Mucosa of descending colon (tissue), 3 donors: ENCODE measurements at regions of chr5 and their contacts with region 1.

Region 1: GRCh38 chr5:151659001-151659754 is 27.5 kb downstream of the SPARC start:
- DNase-seq: peak; percentile 58 to 85 (median 80)
- ATAC-seq: peak; percentile 91
- H3K4me3 ChIP-seq: no peak overlapping the region
- H3K4me1 ChIP-seq: peaks cover 3% of the 10 kb centered on the region
- CTCF ChIP-seq: peak; percentile 67

Region 2: GRCh38 chr5:151569132-151570046 is 89.8 kb before region 1 on chr5:
- intact Hi-C with region 1: no loop called
- DNase-seq: no peak
- ATAC-seq: no peak
- H3K4me3 ChIP-seq: no peak overlapping the region
- H3K4me1 ChIP-seq: no peaks in the 10 kb centered on the region
- CTCF ChIP-seq: no peak

Region 3: GRCh38 chr5:151719228-151720000 is 60.2 kb after region 1 on chr5:
- intact Hi-C with region 1: no loop called
- DNase-seq: peak in 1 of 3 donors; percentile 62
- ATAC-seq: peak; percentile 66
- H3K4me3 ChIP-seq: no peak overlapping the region
- H3K4me1 ChIP-seq: no peaks in the 10 kb centered on the region
- CTCF ChIP-seq: peak; percentile 31

Region 4: GRCh38 chr5:151740336-151740942 is 81.3 kb after region 1 on chr5:
- intact Hi-C with region 1: loop called (anchors 5 kb)
- DNase-seq: peak in 2 of 3 donors; percentile 54 to 63
- ATAC-seq: peak; percentile 77
- H3K4me3 ChIP-seq: no peak overlapping the region
- H3K4me1 ChIP-seq: no peaks in the 10 kb centered on the region
- CTCF ChIP-seq: peak; percentile 74